Activated naive CD4-positive, alpha-beta T cell treated with anti-CD3 and anti-CD28 coated beads for 36 hours (primary cell): ENCODE measurements at regions of chr1 and their contacts with region 1.

Region 1: DNA sequence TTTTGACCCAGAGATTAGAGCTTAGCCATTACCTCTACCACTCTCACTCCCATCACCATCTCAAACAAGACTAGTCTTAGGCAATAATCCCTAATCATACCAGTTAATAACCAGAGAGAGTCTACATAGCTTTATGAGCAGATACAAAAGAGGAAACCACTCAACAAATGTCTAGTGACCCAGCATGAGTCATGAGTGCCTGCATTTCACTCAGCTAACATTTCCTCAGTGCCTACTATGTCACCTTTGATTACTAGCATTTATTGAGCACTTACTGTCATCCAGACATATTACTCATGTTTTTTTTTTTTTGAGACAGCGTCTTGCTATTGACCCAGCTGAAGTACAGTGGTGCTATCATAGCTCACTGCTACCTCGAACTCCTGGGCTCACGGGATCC is 35.9 kb upstream of the GALNT2 start:
- DNase-seq: peak; percentile 48
- H3K4me3 Mint-ChIP-seq: no peak overlapping the region
- H3K27ac Mint-ChIP-seq: peak overlapping the region; percentile 85
- H3K4me1 Mint-ChIP-seq: peaks cover 29% of the 10 kb centered on the region
- H3K27me3 Mint-ChIP-seq: no peaks in the 10 kb centered on the region

Region 2: GRCh38 chr1:230047114-230047865 is 16.2 kb after region 1 on chr1:
- CTCF ChIA-PET with region 1: no interaction called
- intact Hi-C with region 1: no loop called
- DNase-seq: no peak
- H3K4me3 Mint-ChIP-seq: no peak overlapping the region
- H3K27ac Mint-ChIP-seq: no peak overlapping the region
- H3K4me1 Mint-ChIP-seq: peaks cover 3% of the 10 kb centered on the region
- H3K27me3 Mint-ChIP-seq: peaks cover 6% of the 10 kb centered on the region

Region 3: GRCh38 chr1:230066466-230067404 is 35.6 kb after region 1 on chr1 and contains the start of gene GALNT2:
- CTCF ChIA-PET with region 1: no interaction called
- intact Hi-C with region 1: loop called (anchors 1 kb)
- DNase-seq: peak; percentile 89
- H3K4me3 Mint-ChIP-seq: peak within 1 kb of the TSS; percentile 88
- H3K27ac Mint-ChIP-seq: peak within 1 kb of the TSS; percentile 83
- H3K4me1 Mint-ChIP-seq: peaks cover 44% of the 10 kb centered on the region
- H3K27me3 Mint-ChIP-seq: no peaks in the 10 kb centered on the region
- total RNA-seq, gene GALNT2: 59.8 to 62.4 TPM

Region 4: GRCh38 chr1:230123280-230124185 is 92.4 kb after region 1 on chr1:
- CTCF ChIA-PET with region 1: no interaction called
- intact Hi-C with region 1: loop called (anchors 1 kb)
- DNase-seq: peak; percentile 63
- H3K4me3 Mint-ChIP-seq: no peak overlapping the region
- H3K27ac Mint-ChIP-seq: no peak overlapping the region
- H3K4me1 Mint-ChIP-seq: peaks cover 73% of the 10 kb centered on the region
- H3K27me3 Mint-ChIP-seq: no peaks in the 10 kb centered on the region